ENCODE measurements at regions of chr6 and their contacts with region 1.

Region 1: DNA sequence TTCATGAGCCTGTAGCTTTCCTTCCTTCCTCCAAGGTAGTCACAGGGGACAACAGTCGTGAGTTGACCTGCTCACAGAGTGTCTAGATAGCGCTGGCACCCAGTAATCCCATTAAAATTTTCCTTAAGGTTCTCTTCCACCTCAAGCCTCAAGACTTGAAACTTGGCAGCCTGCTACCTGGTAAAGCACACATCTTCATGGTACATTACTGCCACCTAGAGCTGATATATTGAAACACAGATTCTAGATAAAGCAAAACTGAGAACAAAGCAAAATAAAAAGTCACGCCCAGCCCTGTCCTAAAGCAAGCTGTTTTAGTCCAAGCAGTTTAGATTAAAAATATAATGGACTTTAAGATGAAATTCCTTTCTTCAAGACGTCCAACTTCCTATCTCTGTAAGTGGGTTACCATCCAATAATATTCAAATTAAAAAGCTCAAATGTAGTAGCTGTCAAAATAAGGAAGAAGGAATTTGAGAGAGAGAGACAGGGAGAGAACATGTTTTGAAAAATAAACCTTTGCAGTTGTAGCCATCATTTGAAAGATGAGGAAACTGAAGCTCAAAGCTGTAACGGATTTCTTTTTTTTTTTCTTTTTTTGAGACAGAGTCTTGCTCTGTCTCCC is 50.7 kb upstream of the CD83 start:
- DNase-seq: peak; percentile 75
- H3K4me3 ChIP-seq: no peak overlapping the region
- H3K27ac ChIP-seq: no peak overlapping the region
- H3K4me1 ChIP-seq: peaks cover 3% of the 10 kb centered on the region
- CTCF ChIP-seq: peak; percentile 93

Region 2: DNA sequence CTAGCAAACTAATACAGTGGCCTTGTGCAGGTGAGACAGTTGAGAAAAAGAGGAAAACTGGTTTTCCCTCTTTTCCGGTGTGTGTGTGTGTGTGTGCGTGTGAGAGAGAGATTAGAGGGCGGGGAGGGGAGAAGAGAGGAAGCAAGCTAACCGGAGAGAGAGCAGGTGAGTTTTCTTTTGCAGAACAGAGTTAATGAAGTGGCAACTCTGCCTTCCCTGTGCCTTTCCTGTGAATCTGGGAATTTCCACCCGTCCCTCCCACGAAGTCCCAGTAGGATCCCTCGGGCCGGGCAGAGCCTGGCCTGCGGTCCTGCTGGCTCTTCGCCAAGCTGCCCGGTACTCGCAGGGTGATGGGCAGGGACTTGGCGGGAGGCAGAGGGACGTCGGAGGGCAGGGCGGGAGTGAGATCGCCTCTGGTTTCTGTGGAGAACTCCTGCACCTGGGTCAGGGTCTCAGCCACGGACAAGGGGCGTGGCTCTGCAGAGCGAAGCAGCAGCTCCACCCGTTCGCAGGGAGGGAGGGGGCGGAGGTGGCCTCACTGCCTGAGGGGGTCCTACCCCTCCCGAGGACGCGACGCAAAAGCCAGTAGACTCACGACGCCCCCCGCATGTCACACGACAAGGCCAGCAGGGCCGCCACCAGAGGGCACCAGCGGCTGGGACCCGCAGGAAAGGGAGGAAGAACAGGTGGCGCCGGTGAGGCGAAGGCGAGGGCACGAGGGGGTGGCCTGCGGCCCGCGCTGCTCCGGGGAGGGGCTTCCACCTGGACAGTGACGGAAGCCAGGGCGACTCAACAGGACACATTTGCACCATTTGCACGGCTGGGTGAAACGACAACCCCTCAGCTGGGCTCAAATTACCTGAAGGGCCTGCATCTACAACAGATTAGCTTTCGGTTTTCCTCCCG is 193.4 kb before region 1 on chr6:
- CTCF ChIA-PET with region 1: no interaction called
- POLR2A ChIA-PET with region 1: no interaction called
- intact Hi-C with region 1: loop called (anchors 2 kb)
- DNase-seq: peak; percentile 49
- H3K4me3 ChIP-seq: no peak overlapping the region
- H3K27ac ChIP-seq: no peak overlapping the region
- H3K4me1 ChIP-seq: no peaks in the 10 kb centered on the region
- CTCF ChIP-seq: peak; percentile 84

Region 3: DNA sequence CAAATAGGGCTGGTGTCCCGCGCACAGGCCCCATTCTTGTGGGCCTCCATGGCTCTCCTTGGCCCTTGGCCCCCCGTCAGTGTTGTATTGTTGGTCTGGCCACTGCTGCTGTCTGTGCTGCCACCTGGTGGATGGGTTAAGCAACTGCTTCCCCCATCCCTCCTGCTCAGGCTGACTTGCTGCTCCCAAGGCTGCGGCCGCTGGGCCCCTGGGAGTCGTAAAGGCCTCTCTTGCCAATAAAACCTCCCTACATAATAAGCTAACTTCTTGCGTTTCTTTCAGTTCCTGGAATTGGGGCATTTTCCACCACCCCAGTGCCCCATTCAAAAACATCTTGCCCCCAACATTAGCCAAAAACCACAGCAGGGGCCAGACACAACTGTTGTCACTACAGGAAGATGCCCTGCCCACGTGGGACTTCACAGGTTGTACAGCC is 77.8 kb after region 1 on chr6:
- CTCF ChIA-PET with region 1: no interaction called
- POLR2A ChIA-PET with region 1: no interaction called
- intact Hi-C with region 1: loop called (anchors 2 kb)
- DNase-seq: peak; percentile 80
- H3K4me3 ChIP-seq: no peak overlapping the region
- H3K27ac ChIP-seq: no peak overlapping the region
- H3K4me1 ChIP-seq: no peaks in the 10 kb centered on the region
- CTCF ChIP-seq: peak; percentile 96

Region 4: DNA sequence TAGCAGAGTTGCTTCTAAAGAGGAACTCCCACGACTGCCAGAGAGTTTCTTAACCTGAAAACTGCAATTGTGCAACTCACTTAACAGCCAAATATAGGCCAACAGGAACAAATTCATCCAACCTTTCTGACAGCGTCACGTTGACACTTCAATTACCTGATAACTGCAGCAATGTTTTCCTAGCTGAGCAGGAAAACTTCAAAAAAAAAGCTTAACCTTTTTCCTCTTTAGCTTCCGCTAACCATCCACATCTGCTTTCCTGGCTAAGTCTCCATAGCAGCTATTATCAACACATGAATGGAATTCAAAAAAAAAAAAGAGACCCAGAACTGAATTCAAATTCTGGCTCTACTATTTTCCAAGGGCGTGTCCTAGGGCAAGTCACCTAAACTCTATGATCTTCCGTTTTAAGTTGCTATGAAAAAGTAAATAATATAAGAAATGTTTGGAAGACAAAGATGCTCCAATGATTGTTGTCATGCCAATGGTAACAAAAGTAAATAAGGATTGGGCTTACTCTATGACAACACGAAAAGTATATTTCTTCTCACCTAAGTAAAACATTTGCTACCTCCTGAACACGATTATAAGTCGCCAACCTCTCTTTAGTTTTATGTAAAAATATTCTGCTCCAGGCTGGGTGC is 654.3 kb after region 1 on chr6:
- CTCF ChIA-PET with region 1: no interaction called
- POLR2A ChIA-PET with region 1: no interaction called
- intact Hi-C with region 1: no loop called
- DNase-seq: peak; percentile 40
- H3K4me3 ChIP-seq: no peak overlapping the region
- H3K27ac ChIP-seq: no peak overlapping the region
- H3K4me1 ChIP-seq: peaks cover 23% of the 10 kb centered on the region
- CTCF ChIP-seq: no peak